Dendritic cell treated with granulocyte-macrophage colony-stimulating factor and Interleukin-4, amounts not matched to agents 40 ng/mL and 50 ng/mL, for 4 days (primary cell): ENCODE measurements at regions of chr7 and their contacts with region 1.

Region 1: DNA sequence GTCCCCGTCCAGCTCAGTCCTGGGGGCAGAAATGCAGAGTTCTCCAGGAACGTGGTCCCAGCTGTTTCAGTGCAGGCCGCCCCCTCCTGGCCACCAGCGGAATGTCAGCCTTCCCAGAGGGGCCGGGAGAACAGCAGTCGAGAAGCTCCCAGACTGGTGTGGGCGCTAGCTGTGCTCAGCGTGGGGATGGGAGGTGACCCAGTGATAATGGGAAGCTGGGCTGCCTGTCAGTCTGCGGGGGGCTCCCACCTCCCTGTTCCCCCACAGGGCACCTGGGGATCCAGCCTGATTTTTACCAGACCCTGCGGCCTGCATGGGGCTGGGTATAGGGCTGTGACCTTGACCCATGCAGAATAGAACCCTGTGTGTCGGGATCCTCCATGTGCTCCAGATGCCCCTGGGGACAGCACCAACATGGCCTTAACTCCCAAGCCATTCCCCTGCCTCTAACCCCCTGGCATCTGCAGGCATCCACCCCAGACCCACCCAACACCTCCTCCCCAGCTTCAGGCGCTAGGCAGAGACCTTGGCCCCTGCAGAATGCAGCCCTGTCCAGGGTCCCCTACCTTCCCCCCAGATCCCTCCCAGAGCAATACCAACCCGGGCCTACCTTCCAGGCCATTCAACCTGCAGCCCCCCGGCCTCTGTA is 946 bp upstream of the ELN start:
- H3K4me3 Mint-ChIP-seq: no peak overlapping the region
- H3K27ac Mint-ChIP-seq: no peak overlapping the region
- H3K4me1 Mint-ChIP-seq: peaks cover 15% of the 10 kb centered on the region
- H3K27me3 Mint-ChIP-seq: peaks cover 88% of the 10 kb centered on the region

Region 2: DNA sequence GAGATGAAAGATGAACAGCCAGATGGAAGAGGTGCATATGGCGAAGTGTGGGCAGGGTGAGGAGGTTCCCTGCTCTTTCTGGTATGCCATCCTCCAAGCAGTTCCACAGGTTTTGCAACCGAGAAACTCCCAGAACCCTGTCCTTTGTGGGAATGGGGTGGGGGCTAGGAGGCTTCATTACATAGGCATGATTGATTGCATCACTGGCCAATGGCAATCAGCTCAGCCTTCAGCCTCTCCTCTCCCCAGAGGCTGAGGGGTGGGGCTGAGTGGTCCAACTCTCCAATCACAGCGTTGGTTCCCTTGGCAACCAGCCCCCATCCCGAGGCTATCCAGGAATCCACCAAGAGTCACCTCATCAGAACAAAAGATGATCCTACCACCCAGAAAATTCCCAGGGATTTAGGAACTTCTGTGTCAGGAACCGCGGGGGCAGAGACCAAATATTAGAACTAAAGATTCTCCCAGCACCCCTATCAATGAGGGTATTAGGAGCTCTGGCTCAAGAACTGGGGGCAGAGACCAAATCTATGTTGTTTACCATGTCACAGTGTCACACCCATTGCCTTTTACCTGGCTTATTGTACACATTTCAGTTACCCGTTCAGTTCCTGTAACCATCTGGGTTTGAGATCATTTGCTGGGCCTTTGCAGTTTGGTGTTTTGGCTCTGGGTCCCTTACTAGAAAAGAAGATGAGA is 234.3 kb before region 1 on chr7:
- intact Hi-C with region 1: loop called (anchors 10 kb)
- H3K4me3 Mint-ChIP-seq: no peak overlapping the region
- H3K27ac Mint-ChIP-seq: no peak overlapping the region
- H3K4me1 Mint-ChIP-seq: no peaks in the 10 kb centered on the region
- H3K27me3 Mint-ChIP-seq: peaks cover 18% of the 10 kb centered on the region

Region 3: GRCh38 chr7:73865738-73866445 is 161.1 kb before region 1 on chr7:
- intact Hi-C with region 1: loop called (anchors 1 kb)
- H3K4me3 Mint-ChIP-seq: no peak overlapping the region
- H3K27ac Mint-ChIP-seq: no peak overlapping the region
- H3K4me1 Mint-ChIP-seq: no peaks in the 10 kb centered on the region
- H3K27me3 Mint-ChIP-seq: peaks cover 12% of the 10 kb centered on the region

Region 4: DNA sequence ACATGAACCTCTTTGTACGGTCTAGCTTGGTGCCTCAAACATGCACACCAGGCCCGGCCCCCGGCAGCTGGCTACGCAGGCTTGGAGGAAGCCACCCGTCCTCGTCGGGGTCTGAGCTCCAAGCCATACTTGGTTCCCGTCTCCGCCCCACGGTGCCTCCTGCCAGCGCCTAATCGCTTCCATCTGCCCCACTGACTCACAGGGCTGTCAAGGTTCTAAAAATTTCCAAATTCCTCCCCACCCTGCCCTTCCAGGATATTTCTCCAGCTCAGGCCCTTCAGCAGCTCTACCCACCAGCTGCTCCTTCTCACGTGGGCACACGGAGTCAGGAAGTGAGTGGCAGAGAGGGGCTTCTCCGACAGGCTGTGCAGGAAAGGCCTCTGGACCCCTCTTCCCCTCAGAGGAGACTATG is 127.3 kb before region 1 on chr7:
- intact Hi-C with region 1: no loop called
- H3K4me3 Mint-ChIP-seq: no peak overlapping the region
- H3K27ac Mint-ChIP-seq: no peak overlapping the region
- H3K4me1 Mint-ChIP-seq: peaks cover 12% of the 10 kb centered on the region
- H3K27me3 Mint-ChIP-seq: peaks cover 20% of the 10 kb centered on the region